ENCODE measurements at regions of chr19 and their contacts with region 1.

Region 1: GRCh38 chr19:2840794-2841790 is at the start of gene ZNF555:
- DNase-seq: peak; percentile 97 to 100 (median 98)
- ATAC-seq: peak; percentile 97
- H3K4me3 ChIP-seq: peak within 1 kb of the TSS; percentile 69
- H3K4me3 Mint-ChIP-seq: peak within 1 kb of the TSS; percentile 100
- H3K27ac ChIP-seq: peak within 1 kb of the TSS; percentile 58 to 60
- H3K27ac Mint-ChIP-seq: peak within 1 kb of the TSS; percentile 91
- H3K4me1 ChIP-seq: peaks cover 21% of the 10 kb centered on the region
- H3K4me1 Mint-ChIP-seq: peaks cover 25% of the 10 kb centered on the region
- H3K27me3 ChIP-seq: no peaks in the 10 kb centered on the region
- H3K27me3 Mint-ChIP-seq: no peaks in the 10 kb centered on the region
- CTCF ChIP-seq: peak; percentile 74
- total RNA-seq, gene ZNF555: 2.3 to 2.4 TPM

Region 2: GRCh38 chr19:2345794-2346663 is 495.1 kb before region 1 on chr19:
- CTCF ChIA-PET with region 1: no interaction called
- POLR2A ChIA-PET with region 1: no interaction called
- intact Hi-C with region 1: no loop called
- DNase-seq: no peak
- ATAC-seq: no peak
- H3K4me3 ChIP-seq: no peak overlapping the region
- H3K4me3 Mint-ChIP-seq: no peak overlapping the region
- H3K27ac ChIP-seq: no peak overlapping the region
- H3K27ac Mint-ChIP-seq: no peak overlapping the region
- H3K4me1 ChIP-seq: no peaks in the 10 kb centered on the region
- H3K4me1 Mint-ChIP-seq: no peaks in the 10 kb centered on the region
- H3K27me3 ChIP-seq: no peaks in the 10 kb centered on the region
- H3K27me3 Mint-ChIP-seq: no peaks in the 10 kb centered on the region
- CTCF ChIP-seq: no peak

Region 3: GRCh38 chr19:2385053-2385721 is 455.9 kb before region 1 on chr19:
- CTCF ChIA-PET with region 1: no interaction called
- POLR2A ChIA-PET with region 1: no interaction called
- intact Hi-C with region 1: no loop called
- DNase-seq: peak in 3 of 14 experiments; percentile 4 to 44 (median 35)
- ATAC-seq: no peak
- H3K4me3 ChIP-seq: no peak overlapping the region
- H3K4me3 Mint-ChIP-seq: no peak overlapping the region
- H3K27ac ChIP-seq: no peak overlapping the region
- H3K27ac Mint-ChIP-seq: no peak overlapping the region
- H3K4me1 ChIP-seq: peaks cover 2% of the 10 kb centered on the region
- H3K4me1 Mint-ChIP-seq: no peaks in the 10 kb centered on the region
- H3K27me3 ChIP-seq: peaks cover 0 to 7% of the 10 kb centered on the region in 2 experiments
- H3K27me3 Mint-ChIP-seq: peaks cover 5% of the 10 kb centered on the region
- CTCF ChIP-seq: no peak

Region 4: DNA sequence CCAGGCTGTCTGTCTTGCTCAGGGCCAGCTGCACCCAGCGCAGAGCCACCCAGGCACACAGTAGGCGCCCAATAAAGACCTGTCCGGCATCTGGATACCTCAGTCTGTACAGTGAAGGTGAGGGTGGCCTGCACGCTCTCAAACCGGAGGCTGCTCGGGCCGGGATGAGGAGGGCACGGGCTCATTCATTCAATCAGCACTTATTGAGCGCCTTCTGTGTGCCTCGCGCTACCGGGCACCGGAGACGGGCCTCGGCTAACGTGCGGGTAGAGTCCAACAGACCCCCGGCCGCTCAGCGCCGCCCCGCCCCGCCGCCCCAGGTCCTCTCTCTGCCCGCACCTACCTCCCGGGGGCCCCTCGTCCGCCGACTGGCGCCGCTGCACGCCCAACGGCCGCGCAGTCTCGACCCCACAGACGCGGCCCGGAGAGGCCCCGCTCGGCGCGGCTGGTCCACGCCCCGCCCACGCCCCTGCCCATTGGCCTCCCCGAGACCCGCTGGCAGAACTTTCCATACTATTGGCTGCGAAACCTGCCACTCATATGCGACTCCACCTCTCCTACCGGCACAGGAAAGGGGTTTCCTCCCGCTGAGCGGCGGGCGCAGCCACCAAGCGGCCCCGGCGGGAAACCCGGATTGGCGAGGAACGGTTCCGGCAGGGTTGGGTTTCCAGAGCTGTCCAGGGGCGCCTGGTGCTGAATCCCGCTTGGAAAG is 101.3 kb before region 1 on chr19 and contains the start of gene SLC39A3:
- CTCF ChIA-PET with region 1: no interaction called
- POLR2A ChIA-PET with region 1: no interaction called
- intact Hi-C with region 1: no loop called
- DNase-seq: peak; percentile 97 to 100 (median 99)
- ATAC-seq: peak; percentile 100
- H3K4me3 ChIP-seq: peak within 1 kb of the TSS; percentile 73
- H3K4me3 Mint-ChIP-seq: peak within 1 kb of the TSS; percentile 89
- H3K27ac ChIP-seq: no peak within 1 kb of the TSS
- H3K27ac Mint-ChIP-seq: peak within 1 kb of the TSS; percentile 40
- H3K4me1 ChIP-seq: peaks cover 19% of the 10 kb centered on the region
- H3K4me1 Mint-ChIP-seq: peaks cover 17% of the 10 kb centered on the region
- H3K27me3 ChIP-seq: peaks cover 4 to 5% of the 10 kb centered on the region in 2 experiments
- H3K27me3 Mint-ChIP-seq: peaks cover 21% of the 10 kb centered on the region
- CTCF ChIP-seq: no peak
- total RNA-seq, gene SLC39A3: 7.6 to 7.9 TPM

Region 5: DNA sequence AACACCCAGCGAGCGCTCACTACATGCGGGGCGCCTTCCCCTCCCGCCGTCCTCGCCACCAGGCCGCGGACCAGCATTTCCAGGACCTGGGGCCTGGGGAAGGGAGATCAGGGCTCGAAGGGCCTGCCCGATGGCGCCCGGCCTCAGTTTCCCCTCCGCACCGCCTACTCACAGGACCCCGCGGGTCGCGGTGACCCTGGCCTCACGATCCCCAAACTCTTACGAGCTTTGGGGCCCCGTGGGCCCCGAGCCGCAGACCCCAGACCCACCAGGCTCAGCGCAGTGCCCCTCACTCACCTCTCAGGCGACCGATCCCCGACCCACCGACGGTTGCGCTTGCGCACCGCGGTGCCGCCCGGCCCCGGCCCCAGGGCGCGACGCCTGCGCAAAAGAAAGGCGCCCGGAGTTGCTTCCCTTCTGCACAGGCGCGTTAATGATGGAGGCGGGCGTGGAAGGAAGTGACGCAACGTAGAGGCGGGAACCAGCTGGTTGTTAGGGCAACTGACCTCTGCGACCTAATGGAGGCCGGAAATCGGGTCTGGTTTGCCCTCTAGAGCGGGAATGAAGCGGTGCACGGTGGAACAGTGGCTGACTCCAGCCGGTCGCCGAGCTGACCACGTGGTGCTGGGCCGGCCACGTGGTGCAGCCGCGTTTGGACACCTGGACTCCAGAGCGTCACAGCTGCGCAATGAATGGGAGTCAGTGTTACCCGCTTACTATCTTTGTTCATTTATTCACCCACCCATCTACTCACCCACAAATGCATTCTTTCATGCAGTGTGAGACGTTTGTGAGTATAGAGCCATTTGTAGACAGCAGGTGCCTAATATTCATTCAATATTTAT is 57.9 kb before region 1 on chr19 and contains the start of gene SGTA:
- CTCF ChIA-PET with region 1: interaction called, 3 read pairs
- POLR2A ChIA-PET with region 1: interaction called, 8 read pairs
- intact Hi-C with region 1: loop called in 1 of 2 experiments (anchors 2 kb)
- DNase-seq: peak; percentile 91 to 99 (median 95)
- ATAC-seq: peak; percentile 60
- H3K4me3 ChIP-seq: peak within 1 kb of the TSS; percentile 100
- H3K4me3 Mint-ChIP-seq: peak within 1 kb of the TSS; percentile 94
- H3K27ac ChIP-seq: peak within 1 kb of the TSS; percentile 79 to 90
- H3K27ac Mint-ChIP-seq: peak within 1 kb of the TSS; percentile 91
- H3K4me1 ChIP-seq: peaks cover 62% of the 10 kb centered on the region
- H3K4me1 Mint-ChIP-seq: peaks cover 54% of the 10 kb centered on the region
- H3K27me3 ChIP-seq: no peaks in the 10 kb centered on the region
- H3K27me3 Mint-ChIP-seq: no peaks in the 10 kb centered on the region
- CTCF ChIP-seq: peak; percentile 45
- total RNA-seq, gene SGTA: 28.3 to 29.7 TPM

Region 6: GRCh38 chr19:2820112-2820702 is 20.9 kb before region 1 on chr19:
- CTCF ChIA-PET with region 1: interaction called, 11 read pairs
- POLR2A ChIA-PET with region 1: interaction called, 12 read pairs
- intact Hi-C with region 1: loop called (anchors 2 kb)
- DNase-seq: peak in 1 of 14 experiments; percentile 15
- ATAC-seq: peak; percentile 5
- H3K4me3 ChIP-seq: peak overlapping the region; percentile 69
- H3K4me3 Mint-ChIP-seq: peak overlapping the region; percentile 84
- H3K27ac ChIP-seq: no peak overlapping the region
- H3K27ac Mint-ChIP-seq: no peak overlapping the region
- H3K4me1 ChIP-seq: peaks cover 17% of the 10 kb centered on the region
- H3K4me1 Mint-ChIP-seq: peaks cover 8% of the 10 kb centered on the region
- H3K27me3 ChIP-seq: no peaks in the 10 kb centered on the region
- H3K27me3 Mint-ChIP-seq: no peaks in the 10 kb centered on the region
- CTCF ChIP-seq: no peak

Region 7: GRCh38 chr19:2856457-2857050 is 15.5 kb after region 1 on chr19:
- CTCF ChIA-PET with region 1: interaction called, 4 read pairs
- POLR2A ChIA-PET with region 1: interaction called, 12 read pairs
- intact Hi-C with region 1: loop called in 1 of 2 experiments (anchors 1 kb)
- DNase-seq: peak in 4 of 14 experiments; percentile 13 to 82 (median 74)
- ATAC-seq: peak; percentile 88
- H3K4me3 ChIP-seq: no peak overlapping the region
- H3K4me3 Mint-ChIP-seq: peak overlapping the region; percentile 61
- H3K27ac ChIP-seq: peak overlapping the region in 1 of 2 donors; percentile 23
- H3K27ac Mint-ChIP-seq: peak overlapping the region; percentile 57
- H3K4me1 ChIP-seq: peaks cover 35% of the 10 kb centered on the region
- H3K4me1 Mint-ChIP-seq: peaks cover 32% of the 10 kb centered on the region
- H3K27me3 ChIP-seq: no peaks in the 10 kb centered on the region
- H3K27me3 Mint-ChIP-seq: no peaks in the 10 kb centered on the region
- CTCF ChIP-seq: no peak

Region 8: GRCh38 chr19:2900296-2901252 is 59.5 kb after region 1 on chr19 and contains the start of gene ZNF57:
- CTCF ChIA-PET with region 1: no interaction called
- POLR2A ChIA-PET with region 1: interaction called, 7 read pairs
- intact Hi-C with region 1: loop called in 1 of 2 experiments (anchors 5 kb)
- DNase-seq: peak; percentile 93 to 99 (median 97)
- ATAC-seq: peak; percentile 97
- H3K4me3 ChIP-seq: peak within 1 kb of the TSS; percentile 68
- H3K4me3 Mint-ChIP-seq: peak within 1 kb of the TSS; percentile 98
- H3K27ac ChIP-seq: no peak within 1 kb of the TSS
- H3K27ac Mint-ChIP-seq: peak within 1 kb of the TSS; percentile 70
- H3K4me1 ChIP-seq: peaks cover 20% of the 10 kb centered on the region
- H3K4me1 Mint-ChIP-seq: peaks cover 18% of the 10 kb centered on the region
- H3K27me3 ChIP-seq: no peaks in the 10 kb centered on the region
- H3K27me3 Mint-ChIP-seq: no peaks in the 10 kb centered on the region
- CTCF ChIP-seq: no peak
- total RNA-seq, gene ZNF57: 0.47 to 0.82 TPM